CD4-positive, alpha-beta memory T cell (primary cell): ENCODE measurements at regions of chr2 and their contacts with region 1.

Region 1: DNA sequence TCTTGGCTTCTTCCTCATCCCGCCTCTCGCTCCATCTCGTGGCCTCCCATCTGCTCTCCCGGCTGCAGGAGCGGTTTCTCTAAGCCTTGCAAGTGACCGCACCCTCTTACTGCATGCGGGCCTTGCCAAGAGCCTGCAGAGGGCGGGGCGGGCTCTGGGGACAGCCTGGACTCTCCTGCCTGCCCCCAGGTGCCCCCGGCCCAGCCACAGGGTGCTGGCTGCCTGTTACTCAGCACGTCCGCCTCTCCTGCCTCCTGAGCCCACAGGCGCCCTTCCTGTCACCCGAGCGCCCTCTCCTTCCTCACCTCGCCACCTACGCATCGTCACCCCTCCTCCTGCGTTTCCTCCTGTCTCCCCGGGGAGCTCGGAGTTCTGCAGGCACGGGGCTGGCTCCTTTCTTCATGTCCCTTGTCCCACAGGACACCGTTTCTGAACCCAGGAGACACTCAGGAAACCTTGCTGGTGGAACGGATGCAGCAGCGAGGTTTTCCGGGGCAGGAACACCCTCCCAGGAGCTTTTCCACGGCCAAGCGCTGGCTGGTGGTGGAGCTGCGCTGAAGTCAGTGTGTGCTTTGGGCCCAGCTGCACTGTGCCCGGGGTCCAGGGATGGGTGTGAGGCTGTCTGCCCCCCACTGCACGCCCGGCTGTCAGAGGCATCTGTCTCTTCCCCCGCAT is 28.5 kb downstream of the HPCAL1 start:
- DNase-seq: peak; percentile 63 to 86 (median 70)
- H3K4me3 ChIP-seq: peak overlapping the region; percentile 67 to 68
- H3K4me3 Mint-ChIP-seq: peak overlapping the region; percentile 89 to 96 (median 94)
- H3K27ac ChIP-seq: peak overlapping the region; percentile 81
- H3K27ac Mint-ChIP-seq: peak overlapping the region; percentile 89 to 98 (median 95)
- H3K4me1 ChIP-seq: peaks cover 79% of the 10 kb centered on the region
- H3K4me1 Mint-ChIP-seq: peaks cover 54 to 89% (median 75%) of the 10 kb centered on the region in 4 donors
- H3K27me3 ChIP-seq: no peaks in the 10 kb centered on the region
- H3K27me3 Mint-ChIP-seq: no peaks in the 10 kb centered on the region

Region 2: GRCh38 chr2:10122386-10123280 is 208.5 kb before region 1 on chr2 and contains the start of gene RRM2:
- CTCF ChIA-PET with region 1: interaction called, 4 read pairs
- POLR2A ChIA-PET with region 1: interaction called, 4 read pairs
- intact Hi-C with region 1: loop called (anchors 10 kb)
- DNase-seq: peak; percentile 81 to 87 (median 85)
- H3K4me3 ChIP-seq: peak within 1 kb of the TSS; percentile 32 to 50
- H3K4me3 Mint-ChIP-seq: peak within 1 kb of the TSS; percentile 89 to 99 (median 98)
- H3K27ac ChIP-seq: no peak within 1 kb of the TSS
- H3K27ac Mint-ChIP-seq: peak within 1 kb of the TSS; percentile 51 to 91 (median 58)
- H3K4me1 ChIP-seq: peaks cover 52% of the 10 kb centered on the region
- H3K4me1 Mint-ChIP-seq: peaks cover 32 to 56% (median 42%) of the 10 kb centered on the region in 4 donors
- H3K27me3 ChIP-seq: peaks cover 5% of the 10 kb centered on the region
- H3K27me3 Mint-ChIP-seq: peaks cover 5 to 12% of the 10 kb centered on the region in 2 donors
- total RNA-seq, gene RRM2: 0.42 TPM in 1 of 2 experiments, not detected in the other

Region 3: DNA sequence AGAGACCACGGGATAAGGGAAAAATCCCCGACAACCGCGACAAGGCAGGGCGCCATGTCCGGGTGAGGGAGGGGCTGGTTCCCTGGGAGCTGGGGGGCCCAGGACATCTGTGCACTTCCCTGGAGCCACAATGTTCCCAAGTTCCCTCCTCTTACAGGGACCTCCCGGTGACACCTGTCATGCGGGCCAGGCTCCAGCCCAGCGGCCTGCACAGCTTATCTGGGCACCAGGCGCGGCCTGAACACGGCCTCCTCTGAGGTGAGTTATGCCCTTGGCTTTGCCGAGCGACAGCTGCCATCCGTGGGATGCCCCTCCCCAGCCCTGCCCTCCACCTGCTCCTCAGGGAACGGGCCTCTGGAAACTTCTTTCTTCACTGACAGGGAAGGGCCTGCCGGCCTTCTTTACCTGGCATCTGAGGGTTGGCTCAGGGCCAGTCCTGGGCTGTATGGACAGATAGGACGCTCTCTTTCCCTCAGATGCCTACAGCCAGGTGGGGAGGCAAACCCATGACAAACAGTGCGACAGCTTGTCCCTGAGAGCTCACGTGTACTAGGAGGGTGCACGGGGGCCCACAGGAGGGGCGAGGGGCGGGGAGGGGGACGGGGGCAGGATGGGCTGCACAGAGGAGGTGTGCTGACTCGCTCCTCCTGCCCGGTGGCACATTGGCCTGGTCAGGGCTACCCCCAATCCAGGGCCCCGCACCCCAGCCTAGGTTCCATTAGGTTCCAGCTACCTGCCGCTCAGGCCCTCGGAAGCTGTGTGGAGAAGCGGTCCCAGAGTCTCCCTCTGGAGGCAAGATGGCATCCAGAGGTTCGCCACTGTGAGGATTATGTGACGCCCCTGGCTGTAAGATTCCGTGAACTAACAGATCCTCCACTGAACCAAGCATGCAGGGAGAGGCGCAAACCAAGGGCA is 63.4 kb before region 1 on chr2:
- CTCF ChIA-PET with region 1: interaction called, 5 read pairs
- POLR2A ChIA-PET with region 1: interaction called, 3 read pairs
- intact Hi-C with region 1: loop called (anchors 1 kb)
- DNase-seq: no peak
- H3K4me3 ChIP-seq: no peak overlapping the region
- H3K4me3 Mint-ChIP-seq: no peak overlapping the region
- H3K27ac ChIP-seq: no peak overlapping the region
- H3K27ac Mint-ChIP-seq: no peak overlapping the region
- H3K4me1 ChIP-seq: peaks cover 7% of the 10 kb centered on the region
- H3K4me1 Mint-ChIP-seq: peaks cover 1 to 7% (median 4%) of the 10 kb centered on the region in 4 donors
- H3K27me3 ChIP-seq: no peaks in the 10 kb centered on the region
- H3K27me3 Mint-ChIP-seq: no peaks in the 10 kb centered on the region

Region 4: DNA sequence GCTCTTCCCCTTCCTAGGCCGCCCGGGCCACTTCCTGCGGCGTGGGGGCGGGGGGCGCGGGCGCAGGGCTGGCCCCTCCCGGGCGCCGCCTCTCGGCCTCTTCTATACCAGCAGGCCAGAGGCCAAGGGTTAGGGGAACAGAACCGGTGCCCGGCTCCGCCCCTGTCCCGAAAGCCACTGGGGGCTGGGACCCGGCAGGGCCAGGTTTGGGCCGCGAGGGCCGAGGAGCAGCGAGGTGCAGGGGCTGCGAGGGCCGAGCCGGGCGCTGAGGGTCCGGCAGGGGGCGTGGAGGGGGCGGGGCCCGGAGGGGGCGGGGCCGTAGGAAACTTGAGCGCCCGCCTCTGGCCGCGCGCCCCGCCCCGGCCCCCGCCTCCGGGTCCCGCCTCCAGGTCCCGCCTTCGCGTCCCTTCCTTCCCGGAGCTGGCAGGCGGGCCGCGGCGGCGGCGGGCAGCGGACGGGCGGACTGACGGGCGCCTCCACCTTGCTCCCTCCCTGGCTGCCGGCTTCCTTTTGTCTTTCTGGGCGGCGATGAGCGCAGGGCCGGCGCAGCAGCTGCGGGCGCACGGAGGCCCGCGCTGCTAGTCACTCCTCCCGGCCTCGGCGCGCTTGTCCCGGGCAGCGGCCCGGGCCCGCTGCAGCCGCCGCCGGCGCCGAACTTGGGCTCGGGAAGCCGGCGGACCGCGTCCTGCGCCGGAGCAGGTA is 28.5 kb before region 1 on chr2 and contains the start of gene HPCAL1:
- CTCF ChIA-PET with region 1: interaction called, 150 read pairs
- POLR2A ChIA-PET with region 1: interaction called, 362 read pairs
- intact Hi-C with region 1: loop called (anchors 1 kb)
- DNase-seq: peak; percentile 79 to 88 (median 85)
- H3K4me3 ChIP-seq: peak within 1 kb of the TSS; percentile 75 to 77
- H3K4me3 Mint-ChIP-seq: peak within 1 kb of the TSS; percentile 97 to 100 (median 98)
- H3K27ac ChIP-seq: peak within 1 kb of the TSS; percentile 65
- H3K27ac Mint-ChIP-seq: peak within 1 kb of the TSS; percentile 87 to 96 (median 94)
- H3K4me1 ChIP-seq: peaks cover 66% of the 10 kb centered on the region
- H3K4me1 Mint-ChIP-seq: peaks cover 56 to 86% (median 72%) of the 10 kb centered on the region in 4 donors
- H3K27me3 ChIP-seq: no peaks in the 10 kb centered on the region
- H3K27me3 Mint-ChIP-seq: no peaks in the 10 kb centered on the region
- total RNA-seq, gene HPCAL1: 77.1 to 80.7 TPM

Region 5: DNA sequence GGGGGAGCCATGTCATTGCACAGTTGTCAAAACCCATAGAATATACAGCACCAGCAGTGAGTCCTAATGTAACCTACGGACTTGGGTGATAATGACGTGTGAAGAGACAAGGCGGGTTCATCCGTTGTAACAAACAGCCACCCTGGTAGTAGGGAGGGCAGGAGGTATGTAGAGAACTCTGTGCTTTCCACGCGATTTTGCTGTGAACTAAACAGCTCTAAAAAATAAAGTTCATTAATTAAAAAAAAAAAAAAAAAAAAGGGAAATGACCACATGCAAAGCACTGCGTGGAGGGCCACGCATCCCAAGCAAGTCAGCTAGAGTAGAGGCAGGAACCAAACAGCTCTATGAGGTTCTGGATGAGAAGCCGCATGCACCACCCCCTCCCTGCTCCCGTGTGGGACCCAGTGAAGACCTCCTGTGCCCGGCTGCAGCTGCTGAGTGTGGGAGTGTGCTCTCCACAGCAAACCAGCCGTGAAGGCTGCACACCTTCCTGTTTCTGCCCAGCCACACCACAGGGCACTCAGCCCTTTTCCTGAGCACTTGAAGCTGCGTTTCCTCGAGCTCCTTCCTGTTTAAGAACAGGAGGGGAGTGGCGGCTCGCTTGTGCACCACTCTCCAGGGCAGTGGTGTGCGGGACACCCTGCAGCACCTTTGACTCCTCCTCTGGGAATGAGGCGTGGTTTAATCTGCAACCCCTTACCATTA is 51.3 kb after region 1 on chr2:
- CTCF ChIA-PET with region 1: interaction called, 9 read pairs
- POLR2A ChIA-PET with region 1: interaction called, 35 read pairs
- intact Hi-C with region 1: loop called (anchors 2 kb)
- DNase-seq: peak; percentile 63 to 79 (median 72)
- H3K4me3 ChIP-seq: peak overlapping the region; percentile 40 to 68
- H3K4me3 Mint-ChIP-seq: peak overlapping the region; percentile 63 to 85 (median 80)
- H3K27ac ChIP-seq: peak overlapping the region; percentile 36
- H3K27ac Mint-ChIP-seq: peak overlapping the region; percentile 69 to 96 (median 92)
- H3K4me1 ChIP-seq: peaks cover 97% of the 10 kb centered on the region
- H3K4me1 Mint-ChIP-seq: peaks cover 68 to 96% (median 86%) of the 10 kb centered on the region in 4 donors
- H3K27me3 ChIP-seq: no peaks in the 10 kb centered on the region
- H3K27me3 Mint-ChIP-seq: no peaks in the 10 kb centered on the region